ENCODE measurements at regions of chr4 and their contacts with region 1.

Region 1: DNA sequence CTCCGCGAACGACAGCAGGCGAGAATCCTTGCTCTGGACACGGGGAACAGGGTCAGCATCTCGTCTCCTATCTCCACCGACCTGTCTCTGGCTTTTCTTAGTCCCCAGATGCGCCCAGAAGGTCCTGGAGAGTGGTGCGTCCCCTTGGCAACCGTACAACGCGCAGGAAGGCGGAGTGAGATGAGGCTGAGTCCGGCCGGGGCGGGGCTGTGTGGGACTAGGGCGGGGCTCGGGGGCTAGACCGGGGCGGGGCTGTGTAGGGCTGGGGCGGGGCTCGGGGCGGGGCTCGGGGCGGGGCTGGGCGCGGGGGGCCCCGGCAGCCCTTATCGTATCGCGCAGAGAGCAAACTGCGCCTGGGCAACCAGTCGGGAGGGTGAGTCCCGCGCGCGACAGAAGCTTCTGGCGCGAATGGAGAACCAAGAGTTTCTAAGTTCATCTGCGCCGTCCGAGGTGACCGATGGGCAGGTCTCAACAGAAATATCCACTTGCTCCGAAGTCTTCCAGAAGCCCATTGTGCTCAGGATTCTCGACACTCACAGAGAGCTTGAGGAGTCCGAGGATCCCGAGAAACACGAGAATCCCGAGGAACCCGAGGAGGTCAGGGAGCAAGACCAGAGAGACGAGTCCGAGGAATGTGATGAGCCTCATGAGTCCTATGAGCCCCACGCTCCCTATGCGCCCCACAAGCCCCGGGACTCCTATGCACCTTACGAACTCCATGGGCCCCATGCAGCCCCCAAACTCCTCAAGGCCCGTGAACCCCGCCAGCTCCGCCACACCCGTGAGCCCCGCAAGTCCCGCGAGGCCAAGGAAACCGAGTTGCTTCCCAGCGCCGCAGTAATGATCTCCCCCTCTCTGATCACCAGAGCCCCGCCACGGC is 24.9 kb downstream of the ARL9 start:
- DNase-seq: peak; percentile 53 to 75 (median 59)
- ATAC-seq: peak; percentile 99
- H3K4me3 ChIP-seq: peak overlapping the region; percentile 91
- H3K4me3 Mint-ChIP-seq: peak overlapping the region in 1 of 10 donors; percentile 70
- H3K27ac ChIP-seq: peak overlapping the region; percentile 44
- H3K27ac Mint-ChIP-seq: peak overlapping the region in 3 of 9 donors; percentile 26 to 55 (median 38)
- H3K4me1 ChIP-seq: peaks cover 0 to 4% of the 10 kb centered on the region in 2 donors
- H3K4me1 Mint-ChIP-seq: peaks cover 0 to 2% (median 0%) of the 10 kb centered on the region in 7 donors
- H3K27me3 ChIP-seq: peaks cover 0 to 4% of the 10 kb centered on the region in 2 donors
- H3K27me3 Mint-ChIP-seq: peaks cover 0 to 22% (median 7%) of the 10 kb centered on the region in 5 donors

Region 2: DNA sequence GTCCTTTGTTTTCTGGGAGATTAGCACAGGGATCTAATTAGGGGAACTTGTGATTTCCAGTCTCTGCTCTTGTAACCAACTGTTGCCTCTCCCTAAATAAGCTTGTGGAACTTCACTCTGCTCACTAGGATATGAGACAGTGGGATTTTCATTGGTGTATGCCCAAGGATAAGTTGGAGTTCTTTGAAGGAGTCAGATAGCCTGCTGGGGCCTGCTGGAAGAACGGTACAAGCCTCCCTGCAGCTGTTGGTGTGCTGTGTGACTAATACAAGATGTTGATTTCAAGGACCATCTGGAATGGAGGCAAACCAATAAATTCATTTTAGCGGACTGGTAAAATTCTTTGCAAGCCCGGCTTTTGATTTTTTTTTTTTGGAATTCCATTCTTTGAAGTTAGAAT is 310.2 kb before region 1 on chr4:
- CTCF ChIA-PET with region 1: no interaction called
- POLR2A ChIA-PET with region 1: no interaction called
- intact Hi-C with region 1: no loop called
- DNase-seq: no peak
- ATAC-seq: no peak
- H3K4me3 ChIP-seq: no peak overlapping the region
- H3K4me3 Mint-ChIP-seq: no peak overlapping the region
- H3K27ac ChIP-seq: no peak overlapping the region
- H3K27ac Mint-ChIP-seq: no peak overlapping the region
- H3K4me1 ChIP-seq: no peaks in the 10 kb centered on the region
- H3K4me1 Mint-ChIP-seq: no peaks in the 10 kb centered on the region
- H3K27me3 ChIP-seq: no peaks in the 10 kb centered on the region
- H3K27me3 Mint-ChIP-seq: peaks cover 0 to 11% (median 6%) of the 10 kb centered on the region in 5 donors

Region 3: GRCh38 chr4:56505269-56506130 is 25.0 kb before region 1 on chr4 and contains the start of gene ARL9:
- CTCF ChIA-PET with region 1: no interaction called
- POLR2A ChIA-PET with region 1: no interaction called
- intact Hi-C with region 1: loop called (anchors 1 to 2 kb)
- DNase-seq: peak; percentile 49 to 77 (median 68)
- ATAC-seq: peak; percentile 96
- H3K4me3 ChIP-seq: peak within 1 kb of the TSS; percentile 67
- H3K4me3 Mint-ChIP-seq: peak within 1 kb of the TSS; percentile 66 to 96 (median 88)
- H3K27ac ChIP-seq: peak within 1 kb of the TSS; percentile 44
- H3K27ac Mint-ChIP-seq: peak within 1 kb of the TSS in 8 of 9 donors; percentile 49 to 88 (median 72)
- H3K4me1 ChIP-seq: peaks cover 7 to 8% of the 10 kb centered on the region in 2 donors
- H3K4me1 Mint-ChIP-seq: peaks cover 13 to 20% (median 17%) of the 10 kb centered on the region in 7 donors
- H3K27me3 ChIP-seq: no peaks in the 10 kb centered on the region
- H3K27me3 Mint-ChIP-seq: peaks cover 0 to 12% (median 0%) of the 10 kb centered on the region in 5 donors
- total RNA-seq, gene ARL9: 0.19 to 0.43 TPM in 2 of 5 experiments, not detected in the others

Measured in naive thymus-derived CD4-positive, alpha-beta T cell (primary cell).